Activated CD8-positive, alpha-beta T cell treated with anti-CD3 and anti-CD28 coated beads for 36 hours (primary cell): ENCODE measurements at regions of chr17 and their contacts with region 1.

Region 1: DNA sequence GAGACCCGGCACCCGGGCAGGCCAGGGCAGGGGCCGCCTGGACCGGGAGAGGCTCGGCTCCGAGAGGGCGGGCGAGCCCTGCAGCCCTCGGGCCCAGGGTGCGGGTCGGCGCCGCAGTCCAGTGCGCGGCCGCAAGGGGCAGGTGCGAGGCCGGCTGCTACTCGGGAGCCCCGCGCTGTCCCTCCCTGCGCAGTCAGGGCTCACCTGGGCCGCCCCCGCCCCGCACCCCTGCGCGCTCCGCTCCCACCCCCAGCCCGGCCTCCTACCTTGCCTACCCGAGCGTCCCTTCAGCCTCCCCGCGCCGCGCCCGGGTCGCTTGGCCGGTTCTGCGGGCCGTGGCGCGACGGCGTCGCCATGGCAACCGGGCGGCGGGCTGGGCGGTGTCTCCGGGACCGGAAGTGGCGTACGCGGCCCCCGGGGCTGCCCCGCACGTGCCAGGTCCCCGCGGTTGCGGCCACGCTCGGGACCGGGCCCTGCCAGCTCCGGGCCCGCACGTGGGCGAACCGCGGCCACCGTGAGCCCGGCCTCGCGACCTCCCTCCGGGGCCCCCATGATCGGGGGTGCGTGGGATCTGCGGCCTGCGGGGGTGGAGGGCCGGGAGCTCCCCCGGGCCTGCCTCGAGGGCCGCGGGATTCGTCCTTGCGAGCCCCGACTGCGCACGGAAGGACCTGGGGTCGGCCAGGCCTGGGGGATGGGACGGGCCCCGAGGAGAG is at the start of gene CYB561:
- DNase-seq: peak; percentile 68
- ATAC-seq: peak; percentile 68
- H3K4me3 Mint-ChIP-seq: peak within 1 kb of the TSS; percentile 69
- H3K27ac Mint-ChIP-seq: peak within 1 kb of the TSS; percentile 80
- H3K4me1 Mint-ChIP-seq: peaks cover 21% of the 10 kb centered on the region
- H3K27me3 Mint-ChIP-seq: peaks cover 3% of the 10 kb centered on the region
- CTCF ChIP-seq: peak; percentile 53
- total RNA-seq, gene CYB561: 1.5 to 2.2 TPM

Region 2: GRCh38 chr17:63358111-63358839 is 87.9 kb before region 1 on chr17:
- CTCF ChIA-PET with region 1: no interaction called
- POLR2A ChIA-PET with region 1: no interaction called
- intact Hi-C with region 1: no loop called
- DNase-seq: no peak
- ATAC-seq: no peak
- H3K4me3 Mint-ChIP-seq: no peak overlapping the region
- H3K27ac Mint-ChIP-seq: no peak overlapping the region
- H3K4me1 Mint-ChIP-seq: peaks cover 4% of the 10 kb centered on the region
- H3K27me3 Mint-ChIP-seq: no peaks in the 10 kb centered on the region
- CTCF ChIP-seq: no peak

Region 3: DNA sequence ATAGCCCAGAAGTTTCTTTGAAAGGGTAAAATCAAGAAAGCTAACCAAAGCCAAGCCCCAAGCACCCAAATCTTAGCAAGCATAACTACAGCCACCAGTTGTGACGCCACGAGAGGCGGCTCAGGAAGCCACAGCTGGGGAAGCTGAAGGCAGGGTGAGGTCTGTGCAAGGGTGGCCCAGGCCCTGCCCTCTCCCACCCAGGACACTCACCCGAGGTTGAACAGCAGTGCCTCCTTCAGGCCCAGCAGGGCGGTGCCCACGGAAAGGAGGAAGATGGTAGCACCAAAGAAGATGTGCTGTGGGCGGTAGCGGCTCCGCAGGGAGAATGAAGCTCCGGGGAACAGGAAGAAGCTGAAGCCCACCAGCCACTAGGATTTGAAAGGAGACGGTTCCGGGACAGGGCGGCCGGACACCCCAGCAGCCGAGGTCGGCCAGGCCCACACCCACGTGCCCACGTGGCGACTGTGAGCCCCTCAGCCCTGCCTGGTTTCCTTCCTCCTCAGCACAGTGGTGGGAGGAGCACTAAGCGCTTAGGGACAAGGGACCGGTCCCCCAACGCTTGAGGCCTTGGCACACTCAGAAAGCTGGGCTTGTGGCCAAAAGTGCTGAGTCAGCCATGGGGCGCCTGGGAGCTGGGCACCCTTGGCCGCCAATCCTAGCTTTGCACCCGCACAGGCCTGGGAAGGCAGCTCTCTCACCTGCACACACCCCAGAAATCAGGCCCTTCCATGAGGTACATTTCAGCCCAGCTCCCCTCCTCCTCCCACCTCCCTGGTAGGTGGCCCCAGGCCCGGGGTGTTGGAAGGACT is 11.1 kb before region 1 on chr17:
- CTCF ChIA-PET with region 1: interaction called, 14 read pairs
- POLR2A ChIA-PET with region 1: interaction called, 11 read pairs
- intact Hi-C with region 1: no loop called
- DNase-seq: peak; percentile 58
- ATAC-seq: peak; percentile 71
- H3K4me3 Mint-ChIP-seq: peak overlapping the region; percentile 35
- H3K27ac Mint-ChIP-seq: peak overlapping the region; percentile 80
- H3K4me1 Mint-ChIP-seq: peaks cover 32% of the 10 kb centered on the region
- H3K27me3 Mint-ChIP-seq: no peaks in the 10 kb centered on the region
- CTCF ChIP-seq: no peak